Prostate gland (tissue), 2 donors: ENCODE measurements at regions of chr12 and their contacts with region 1.

Region 1: GRCh38 chr12:93689076-93689834 is 12.1 kb downstream of the CRADD start:
- DNase-seq: peak; percentile 91
- H3K4me3 ChIP-seq: no peak overlapping the region
- H3K27ac ChIP-seq: peak overlapping the region; percentile 77 to 85
- H3K4me1 ChIP-seq: peaks cover 6% of the 10 kb centered on the region
- H3K27me3 ChIP-seq: no peaks in the 10 kb centered on the region
- CTCF ChIP-seq: peak in 1 of 4 experiments; percentile 21
- POLR2A ChIP-seq: no peak

Region 2: DNA sequence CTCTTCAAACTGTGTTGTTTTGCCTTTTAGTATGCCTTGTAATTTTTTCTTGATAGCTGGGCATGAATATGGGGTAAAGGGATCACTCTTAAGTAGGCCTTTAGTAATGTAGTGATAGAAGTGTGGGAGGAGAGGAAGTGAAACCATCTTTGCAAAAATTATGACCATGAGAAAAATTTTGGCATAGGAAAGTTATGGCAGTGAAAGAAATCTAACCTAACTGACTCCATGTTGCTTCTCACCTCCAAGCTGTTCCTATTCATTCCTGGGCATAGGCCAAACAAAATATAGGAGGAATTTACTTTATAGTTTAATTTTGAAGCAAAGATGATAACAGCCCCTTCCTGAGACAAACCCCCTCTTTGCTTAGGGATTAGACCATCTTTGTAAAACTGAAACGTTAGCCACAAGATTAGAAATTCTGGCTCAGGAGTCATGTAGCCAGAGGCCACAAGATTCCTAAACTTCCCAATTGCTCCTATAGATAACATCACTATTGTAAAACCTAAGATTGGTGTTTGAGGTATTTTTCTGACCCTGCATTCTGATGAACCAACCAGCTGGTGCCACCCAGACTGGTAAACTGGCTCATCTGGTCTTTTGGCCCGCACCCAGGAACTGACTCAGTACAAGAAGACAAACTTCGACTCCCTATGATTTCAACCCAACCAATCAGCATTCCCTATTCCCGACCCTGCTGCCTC is 33.7 kb after region 1 on chr12:
- intact Hi-C with region 1: no loop called
- DNase-seq: no peak
- H3K4me3 ChIP-seq: no peak overlapping the region
- H3K27ac ChIP-seq: no peak overlapping the region
- H3K4me1 ChIP-seq: peaks cover 3% of the 10 kb centered on the region
- H3K27me3 ChIP-seq: no peaks in the 10 kb centered on the region
- CTCF ChIP-seq: no peak
- POLR2A ChIP-seq: no peak

Region 3: GRCh38 chr12:93733358-93733757 is 44.1 kb after region 1 on chr12:
- intact Hi-C with region 1: loop called (anchors 5 kb)
- DNase-seq: no peak
- H3K4me3 ChIP-seq: no peak overlapping the region
- H3K27ac ChIP-seq: no peak overlapping the region
- H3K4me1 ChIP-seq: peaks cover 7% of the 10 kb centered on the region
- H3K27me3 ChIP-seq: no peaks in the 10 kb centered on the region
- CTCF ChIP-seq: no peak
- POLR2A ChIP-seq: no peak

Region 4: DNA sequence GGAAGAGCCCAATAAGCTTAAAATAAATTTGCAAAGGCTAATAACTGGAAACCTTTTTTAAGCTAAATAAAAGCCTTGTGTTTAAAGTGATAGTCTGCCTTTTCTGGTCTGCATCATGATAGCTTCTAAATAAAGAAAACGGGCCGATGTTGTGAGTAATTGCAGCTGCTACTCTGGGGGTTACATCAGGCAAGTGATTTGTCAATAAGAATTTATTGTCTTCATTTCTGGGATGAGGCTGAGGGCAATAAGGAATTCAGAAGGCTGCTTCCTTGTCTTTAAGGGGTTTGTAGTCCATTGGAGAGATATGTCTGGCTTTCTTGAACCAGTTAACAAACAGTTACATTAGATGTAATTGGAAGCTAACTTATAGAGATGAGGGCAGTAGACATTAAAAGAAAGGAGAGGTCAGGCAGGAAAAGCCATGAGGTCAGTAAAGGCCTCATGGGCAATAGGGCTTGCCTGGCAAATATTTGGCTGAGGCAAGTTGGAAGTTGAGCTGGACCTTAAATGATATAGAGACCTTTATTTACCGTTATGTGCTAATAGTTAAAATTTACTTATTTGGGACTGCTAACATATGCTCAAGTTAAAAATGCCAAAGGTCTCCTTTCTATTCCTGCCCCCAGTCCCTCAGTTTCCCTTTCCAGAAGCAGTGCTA is 72.9 kb after region 1 on chr12:
- intact Hi-C with region 1: no loop called
- DNase-seq: no peak
- H3K4me3 ChIP-seq: no peak overlapping the region
- H3K27ac ChIP-seq: peak overlapping the region in 1 of 2 donors; percentile 7
- H3K4me1 ChIP-seq: no peaks in the 10 kb centered on the region
- H3K27me3 ChIP-seq: no peaks in the 10 kb centered on the region
- CTCF ChIP-seq: no peak
- POLR2A ChIP-seq: no peak